ENCODE measurements at regions of chr1 and their contacts with region 1.

Region 1: GRCh38 chr1:221741711-221742554 is at the start of gene DUSP10:
- DNase-seq: peak; percentile 96 to 99
- ATAC-seq: peak; percentile 93 to 98 (median 97)
- H3K4me3 ChIP-seq: peak within 1 kb of the TSS; percentile 54 to 86 (median 67)
- H3K27ac ChIP-seq: peak within 1 kb of the TSS; percentile 86 to 100 (median 98)
- H3K4me1 ChIP-seq: peaks cover 3 to 30% (median 18%) of the 10 kb centered on the region in 9 donors
- H3K27me3 ChIP-seq: no peaks in the 10 kb centered on the region
- CTCF ChIP-seq: no peak
- total RNA-seq, gene DUSP10: 1.8 to 9.7 (median 4.0) TPM

Region 2: DNA sequence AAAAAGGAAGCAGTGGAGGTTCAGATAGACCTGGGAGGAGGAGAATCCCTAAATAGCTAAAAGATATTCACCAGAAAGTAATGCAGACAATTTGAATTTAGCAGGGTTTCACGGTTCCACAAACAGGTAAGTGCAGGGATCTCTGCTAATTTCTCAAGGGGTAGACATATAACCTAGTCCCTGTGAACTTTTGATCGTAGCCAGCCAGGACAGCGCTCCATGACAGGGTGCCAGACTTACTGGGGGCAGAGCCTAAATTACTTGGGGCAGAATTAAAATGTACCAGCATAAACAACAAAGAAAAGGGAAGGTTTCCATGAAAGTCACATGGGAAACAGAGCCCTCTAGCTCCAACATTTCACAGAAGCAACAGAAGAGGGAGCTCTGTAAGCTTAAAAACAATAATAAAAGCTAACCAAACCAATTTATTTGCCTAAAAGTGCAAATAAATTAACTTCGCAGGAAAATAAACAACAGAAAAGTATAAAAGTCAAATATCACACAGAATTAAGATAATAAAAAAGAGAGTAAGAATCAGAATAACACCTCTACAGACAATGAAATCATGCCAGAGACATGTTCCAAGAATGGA is 198.3 kb before region 1 on chr1:
- intact Hi-C with region 1: loop called in 2 of 10 experiments (anchors 5 kb)
- DNase-seq: no peak
- ATAC-seq: peak in 3 of 8 donors; percentile 22 to 61 (median 37)
- H3K4me3 ChIP-seq: no peak overlapping the region
- H3K27ac ChIP-seq: no peak overlapping the region
- H3K4me1 ChIP-seq: no peaks in the 10 kb centered on the region
- H3K27me3 ChIP-seq: peaks cover 0 to 3% (median 0%) of the 10 kb centered on the region in 7 donors
- CTCF ChIP-seq: peak; percentile 11 to 69 (median 60)

Region 3: GRCh38 chr1:221567859-221568507 is 173.9 kb before region 1 on chr1:
- intact Hi-C with region 1: loop called in 2 of 10 experiments (anchors 5 to 10 kb)
- DNase-seq: no peak
- ATAC-seq: no peak
- H3K4me3 ChIP-seq: no peak overlapping the region
- H3K27ac ChIP-seq: no peak overlapping the region
- H3K4me1 ChIP-seq: peaks cover 0 to 37% (median 10%) of the 10 kb centered on the region in 9 donors
- H3K27me3 ChIP-seq: no peaks in the 10 kb centered on the region
- CTCF ChIP-seq: no peak

Region 4: DNA sequence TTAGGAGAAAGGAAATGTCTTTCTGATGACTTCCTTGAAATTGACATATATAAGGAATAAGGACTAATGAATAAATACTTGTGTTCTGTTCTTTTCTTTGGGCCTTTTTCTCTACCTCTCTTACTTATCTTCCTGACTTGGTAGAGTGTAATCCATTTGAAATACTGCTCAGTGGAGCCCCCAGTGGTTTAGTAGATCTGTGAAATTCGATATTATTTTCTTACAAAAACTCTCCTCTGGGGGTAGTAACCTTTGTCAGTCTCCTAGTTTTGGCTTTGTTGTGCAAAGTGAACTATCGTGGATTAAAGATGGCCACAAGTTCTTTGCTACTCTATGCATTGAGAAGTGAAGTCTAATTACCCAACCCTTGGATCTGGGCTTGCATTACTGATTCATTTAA is 48.8 kb before region 1 on chr1:
- intact Hi-C with region 1: no loop called
- DNase-seq: no peak
- ATAC-seq: no peak
- H3K4me3 ChIP-seq: no peak overlapping the region
- H3K27ac ChIP-seq: no peak overlapping the region
- H3K4me1 ChIP-seq: peaks cover 0 to 12% (median 0%) of the 10 kb centered on the region in 9 donors
- H3K27me3 ChIP-seq: no peaks in the 10 kb centered on the region
- CTCF ChIP-seq: no peak

Region 5: GRCh38 chr1:222009105-222009730 is 267.3 kb after region 1 on chr1:
- intact Hi-C with region 1: loop called in 1 of 10 experiments (anchors 10 kb)
- DNase-seq: no peak
- ATAC-seq: peak in 3 of 8 donors; percentile 41 to 48 (median 47)
- H3K4me3 ChIP-seq: no peak overlapping the region
- H3K27ac ChIP-seq: no peak overlapping the region
- H3K4me1 ChIP-seq: peaks cover 0 to 5% (median 0%) of the 10 kb centered on the region in 9 donors
- H3K27me3 ChIP-seq: no peaks in the 10 kb centered on the region
- CTCF ChIP-seq: peak in 7 of 9 donors; percentile 23 to 55 (median 49)

Region 6: DNA sequence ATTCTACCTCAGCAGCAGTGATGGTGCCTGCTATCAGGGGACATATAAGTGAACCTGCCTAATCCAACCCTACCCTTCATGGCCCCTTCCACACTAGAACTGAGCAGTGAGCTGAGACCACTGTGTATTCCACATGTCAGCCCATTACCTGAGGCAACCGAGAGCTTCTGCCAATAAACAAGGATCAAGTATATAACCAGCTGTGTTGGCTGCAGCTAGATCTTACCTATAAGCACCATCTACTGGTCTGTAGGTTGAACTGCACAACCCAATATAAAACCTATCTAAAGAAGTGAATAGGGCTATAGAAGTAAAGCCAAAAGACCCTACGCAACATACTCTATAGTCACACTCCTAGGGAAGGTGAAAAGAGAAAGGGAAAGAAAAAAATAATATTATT is 429.1 kb after region 1 on chr1:
- intact Hi-C with region 1: loop called in 2 of 10 experiments (anchors 10 kb)
- DNase-seq: no peak
- ATAC-seq: peak in 3 of 8 donors; percentile 38 to 55 (median 49)
- H3K4me3 ChIP-seq: no peak overlapping the region
- H3K27ac ChIP-seq: no peak overlapping the region
- H3K4me1 ChIP-seq: no peaks in the 10 kb centered on the region
- H3K27me3 ChIP-seq: no peaks in the 10 kb centered on the region
- CTCF ChIP-seq: peak; percentile 9 to 61 (median 53)